Natural killer cell (primary cell): ENCODE measurements at regions of chr7 and their contacts with region 1.

Region 1: DNA sequence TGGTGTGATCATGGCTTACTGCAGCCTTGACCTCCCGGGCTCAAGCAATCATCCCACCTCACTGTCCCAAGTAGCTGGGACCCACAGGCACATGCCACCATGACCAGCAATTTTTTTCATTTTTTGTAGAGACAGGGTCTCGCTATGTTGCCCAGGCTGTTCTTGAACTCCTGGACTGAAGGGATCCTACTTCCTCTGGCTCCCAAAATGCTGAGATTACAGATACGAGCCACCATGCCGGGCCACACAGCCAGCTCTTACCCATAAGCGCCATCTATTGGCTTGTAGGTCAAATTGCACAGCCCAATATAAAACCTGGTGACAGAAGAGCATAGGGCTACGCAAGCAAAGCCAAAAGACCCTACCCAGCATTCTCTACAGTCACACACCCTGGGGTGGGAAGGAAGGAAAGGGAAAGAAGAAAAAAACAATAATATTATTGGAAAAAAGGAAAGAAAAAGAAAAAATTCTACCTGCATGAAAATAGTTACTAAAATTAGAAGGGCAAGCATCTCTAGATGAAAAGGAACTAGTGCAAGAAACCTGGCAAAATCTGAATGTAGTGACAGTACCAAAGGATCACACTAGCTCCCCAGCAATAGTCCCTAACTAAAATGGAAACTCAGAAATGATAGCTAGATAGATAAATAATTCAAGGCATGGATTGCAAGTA is 29.4 kb upstream of the AMPH start:
- DNase-seq: peak in 1 of 2 donors; percentile 62
- ATAC-seq: peak; percentile 75 to 86 (median 76)
- H3K4me3 ChIP-seq: no peak overlapping the region
- H3K4me3 Mint-ChIP-seq: no peak overlapping the region
- H3K27ac ChIP-seq: no peak overlapping the region
- H3K27ac Mint-ChIP-seq: no peak overlapping the region
- H3K4me1 ChIP-seq: no peaks in the 10 kb centered on the region
- H3K4me1 Mint-ChIP-seq: no peaks in the 10 kb centered on the region
- H3K27me3 ChIP-seq: no peaks in the 10 kb centered on the region
- H3K27me3 Mint-ChIP-seq: peaks cover 35 to 66% of the 10 kb centered on the region in 2 donors
- CTCF ChIP-seq: peak; percentile 87

Region 2: DNA sequence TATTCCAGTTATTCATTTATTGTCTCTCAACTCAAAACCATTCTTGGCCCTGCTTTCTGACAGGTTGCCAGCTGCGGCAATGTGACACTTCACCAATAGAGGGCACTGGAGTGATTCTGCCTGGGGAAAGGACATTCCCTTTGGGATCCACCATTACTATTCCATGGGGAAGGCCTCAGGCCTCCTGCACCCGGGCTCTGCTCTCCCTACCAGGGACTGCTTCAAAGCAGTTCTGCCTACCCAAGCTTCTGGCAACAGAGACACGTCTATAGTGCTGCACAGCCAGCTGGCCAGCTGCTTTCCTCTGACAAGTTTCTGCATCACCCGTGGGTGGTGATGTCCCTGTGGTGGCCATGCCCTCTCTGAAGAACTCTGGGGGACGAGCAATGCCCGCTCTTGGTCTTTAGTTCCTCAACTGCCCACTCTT is 1375.7 kb before region 1 on chr7:
- intact Hi-C with region 1: no loop called
- DNase-seq: peak in 1 of 2 donors; percentile 64
- ATAC-seq: peak in 1 of 3 donors; percentile 49
- H3K4me3 ChIP-seq: no peak overlapping the region
- H3K4me3 Mint-ChIP-seq: no peak overlapping the region
- H3K27ac ChIP-seq: no peak overlapping the region
- H3K27ac Mint-ChIP-seq: peak overlapping the region in 1 of 2 donors; percentile 23
- H3K4me1 ChIP-seq: peaks cover 11% of the 10 kb centered on the region
- H3K4me1 Mint-ChIP-seq: peaks cover 58 to 64% of the 10 kb centered on the region in 2 donors
- H3K27me3 ChIP-seq: no peaks in the 10 kb centered on the region
- H3K27me3 Mint-ChIP-seq: no peaks in the 10 kb centered on the region
- CTCF ChIP-seq: peak; percentile 79

Region 3: DNA sequence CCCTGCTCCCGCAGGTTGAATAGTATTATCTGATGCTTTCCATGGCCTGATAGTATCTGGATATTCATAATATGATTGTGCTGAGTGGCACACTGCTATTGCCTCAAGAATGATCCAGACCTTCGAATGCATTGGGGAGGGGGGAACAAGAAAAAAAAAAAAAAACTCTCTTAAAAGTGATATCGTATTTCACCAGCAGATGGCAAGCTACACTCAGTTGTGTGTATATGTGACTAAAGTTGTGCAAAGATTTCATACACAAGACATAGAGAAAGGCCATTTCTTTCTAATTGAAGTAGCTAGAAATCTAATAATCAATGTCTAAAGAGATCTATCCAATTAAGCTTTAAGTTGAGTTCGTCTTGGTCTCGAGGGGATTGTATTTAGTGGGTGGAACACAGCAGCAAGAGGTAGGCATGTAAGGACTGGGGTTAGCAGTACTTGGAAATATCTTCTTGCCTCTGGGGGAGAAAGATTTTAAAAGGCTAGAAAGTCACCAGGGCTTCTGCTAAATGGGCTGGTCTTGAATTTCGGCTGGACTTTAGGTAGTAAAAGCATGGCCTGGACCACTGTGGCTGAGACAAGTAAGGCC is 759.2 kb before region 1 on chr7:
- intact Hi-C with region 1: loop called (anchors 10 kb)
- DNase-seq: peak in 1 of 2 donors; percentile 34
- ATAC-seq: peak in 2 of 3 donors; percentile 35 to 54
- H3K4me3 ChIP-seq: no peak overlapping the region
- H3K4me3 Mint-ChIP-seq: no peak overlapping the region
- H3K27ac ChIP-seq: no peak overlapping the region
- H3K27ac Mint-ChIP-seq: no peak overlapping the region
- H3K4me1 ChIP-seq: no peaks in the 10 kb centered on the region
- H3K4me1 Mint-ChIP-seq: no peaks in the 10 kb centered on the region
- H3K27me3 ChIP-seq: no peaks in the 10 kb centered on the region
- H3K27me3 Mint-ChIP-seq: peaks cover 0 to 2% of the 10 kb centered on the region in 2 donors
- CTCF ChIP-seq: peak; percentile 55

Region 4: DNA sequence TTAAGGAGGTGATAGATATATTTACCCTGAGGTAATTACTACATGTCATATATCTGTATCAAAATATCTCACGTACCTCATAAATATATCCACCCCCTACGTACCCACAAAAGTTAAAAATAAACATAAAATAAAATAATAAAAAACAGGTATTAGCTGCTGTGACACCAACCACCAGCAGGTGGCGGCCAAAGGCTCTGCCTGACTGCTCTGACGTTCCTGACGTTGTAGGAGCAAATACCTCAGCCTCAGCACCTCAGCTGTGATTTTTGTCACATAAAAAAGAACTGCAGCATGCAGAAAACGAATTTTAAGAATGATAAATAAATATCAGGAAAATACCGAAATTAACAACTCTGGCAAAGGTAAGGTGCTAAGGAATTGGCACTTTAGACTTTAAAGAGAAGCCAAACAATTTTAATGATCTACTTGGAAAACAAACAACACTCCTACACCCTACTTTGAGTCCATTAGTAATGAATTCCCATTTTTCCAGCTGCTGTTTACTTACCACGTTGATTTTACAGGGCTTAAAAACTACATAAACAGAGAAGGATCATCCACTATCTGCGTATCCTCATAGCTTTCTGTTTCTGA is 261.7 kb before region 1 on chr7:
- intact Hi-C with region 1: loop called (anchors 1 kb)
- DNase-seq: peak; percentile 36 to 77
- ATAC-seq: peak; percentile 75 to 79 (median 76)
- H3K4me3 ChIP-seq: no peak overlapping the region
- H3K4me3 Mint-ChIP-seq: no peak overlapping the region
- H3K27ac ChIP-seq: no peak overlapping the region
- H3K27ac Mint-ChIP-seq: no peak overlapping the region
- H3K4me1 ChIP-seq: peaks cover 5% of the 10 kb centered on the region
- H3K4me1 Mint-ChIP-seq: peaks cover 13 to 18% of the 10 kb centered on the region in 2 donors
- H3K27me3 ChIP-seq: no peaks in the 10 kb centered on the region
- H3K27me3 Mint-ChIP-seq: peaks cover 0 to 6% of the 10 kb centered on the region in 2 donors
- CTCF ChIP-seq: peak; percentile 96